Panc1 (cell line): ENCODE measurements at regions of chr20 and their contacts with region 1.

Region 1: GRCh38 chr20:31713312-31714273 is 9.1 kb downstream of the BCL2L1 start:
- DNase-seq: no peak
- ATAC-seq: peak; percentile 76
- H3K4me3 ChIP-seq: peak overlapping the region in 1 of 2 experiments; percentile 17; a peak in 2 of 4 replicates
- H3K27ac ChIP-seq: peak overlapping the region; percentile 92
- H3K4me1 ChIP-seq: peaks cover 73% of the 10 kb centered on the region
- H3K27me3 ChIP-seq: no peaks in the 10 kb centered on the region
- CTCF ChIP-seq: no peak

Region 2: GRCh38 chr20:31394900-31395299 is 318.7 kb before region 1 on chr20:
- CTCF ChIA-PET with region 1: no interaction called
- POLR2A ChIA-PET with region 1: no interaction called
- in situ Hi-C with region 1: no loop called
- intact Hi-C with region 1: no loop called
- DNase-seq: no peak
- ATAC-seq: no peak
- H3K4me3 ChIP-seq: no peak overlapping the region
- H3K27ac ChIP-seq: no peak overlapping the region
- H3K4me1 ChIP-seq: no peaks in the 10 kb centered on the region
- H3K27me3 ChIP-seq: 0 out of 2 replicates have a peak, but pooled peaks cover 4% of the 10 kb centered on the region
- CTCF ChIP-seq: no peak

Region 3: DNA sequence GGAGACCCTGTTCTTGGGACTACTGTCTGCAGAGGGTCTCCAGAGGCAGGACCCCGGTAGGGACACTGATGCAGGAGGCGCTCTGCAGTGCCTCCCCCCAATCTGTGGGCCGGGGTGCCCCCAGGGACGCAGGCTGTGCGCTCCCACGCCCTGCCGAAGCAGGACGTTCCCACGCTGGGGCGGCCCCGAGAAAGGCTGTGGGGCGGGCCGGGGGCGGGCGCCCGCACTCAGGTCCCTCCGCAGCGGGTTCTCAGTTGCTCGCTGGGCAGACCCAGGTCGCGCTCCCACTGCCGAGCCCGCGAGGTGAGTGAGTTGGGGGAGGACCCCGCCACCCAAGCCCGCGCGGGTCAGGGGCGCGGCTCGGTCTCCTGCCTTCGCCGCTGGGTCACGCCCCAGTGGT is 75.9 kb before region 1 on chr20 and contains the start of gene COX4I2:
- CTCF ChIA-PET with region 1: interaction called, 14 read pairs
- POLR2A ChIA-PET with region 1: no interaction called
- in situ Hi-C with region 1: no loop called
- intact Hi-C with region 1: no loop called
- DNase-seq: no peak
- ATAC-seq: no peak
- H3K4me3 ChIP-seq: no peak within 1 kb of the TSS
- H3K27ac ChIP-seq: no peak within 1 kb of the TSS
- H3K4me1 ChIP-seq: no peaks in the 10 kb centered on the region
- H3K27me3 ChIP-seq: no peaks in the 10 kb centered on the region
- CTCF ChIP-seq: no peak
- total RNA-seq, gene COX4I2: not detected